GM10248 (cell line): ENCODE measurements at regions of chr2 and their contacts with region 1.

Region 1: DNA sequence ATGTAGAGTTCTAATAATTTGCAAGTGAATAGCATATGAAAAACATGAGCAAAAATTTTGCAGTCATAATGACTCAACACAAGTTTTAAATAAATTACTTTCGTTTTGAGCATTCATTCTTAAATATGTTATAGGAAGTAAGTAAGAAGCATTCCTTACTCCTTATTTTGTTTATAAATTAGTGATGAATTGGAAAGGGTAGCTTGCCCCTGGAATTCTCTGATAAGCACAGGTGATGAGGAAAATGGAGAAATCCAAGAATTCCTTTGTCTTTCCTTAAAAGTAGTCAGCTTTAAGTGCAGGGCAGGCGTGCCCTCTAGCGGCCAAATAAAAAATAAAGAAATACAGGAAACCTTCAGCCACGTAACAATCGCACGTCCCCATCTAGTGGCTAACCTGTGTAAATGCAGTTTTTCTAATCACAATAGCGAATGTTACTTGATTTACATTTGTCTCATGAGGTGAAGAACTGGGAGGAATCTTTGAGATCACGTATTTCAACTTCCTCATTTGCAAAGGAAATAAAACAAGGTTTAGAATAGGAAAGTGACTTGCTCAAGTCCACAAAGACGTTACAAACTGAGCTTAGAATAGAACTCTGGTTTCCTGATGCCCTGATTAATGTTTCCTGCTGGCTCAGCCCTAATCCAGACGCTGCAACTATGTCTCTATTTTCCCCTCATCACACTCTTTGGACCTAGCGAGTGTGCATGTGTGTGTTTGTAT is 47.2 kb upstream of the ZNG1B start:
- DNase-seq: peak; percentile 69
- CTCF ChIP-seq: peak; percentile 96

Region 2: GRCh38 chr2:112839407-112840067 is 550.8 kb before region 1 on chr2:
- CTCF ChIA-PET with region 1: no interaction called
- POLR2A ChIA-PET with region 1: no interaction called
- DNase-seq: no peak
- CTCF ChIP-seq: no peak

Region 3: DNA sequence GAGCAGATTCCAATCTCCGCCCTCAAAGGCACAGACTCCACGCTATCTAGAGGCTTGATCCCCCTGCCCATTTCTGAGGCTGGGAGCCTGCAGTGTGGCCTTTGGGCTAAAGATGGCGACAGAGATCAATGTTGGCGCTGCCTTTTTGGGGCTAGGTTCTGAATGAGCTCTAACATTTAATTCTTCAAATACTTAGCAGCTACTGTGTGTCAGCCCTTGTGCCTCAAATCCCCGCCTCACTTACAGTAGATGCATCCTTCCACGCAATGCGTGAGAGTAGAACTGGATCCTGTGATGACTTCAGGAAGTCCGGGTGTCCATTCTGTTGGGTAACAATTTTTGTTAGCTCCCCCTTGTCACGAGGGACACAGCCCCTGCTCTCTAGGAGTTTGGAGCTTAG is 310.2 kb before region 1 on chr2:
- CTCF ChIA-PET with region 1: interaction called, 13 read pairs
- POLR2A ChIA-PET with region 1: no interaction called
- DNase-seq: peak; percentile 57
- CTCF ChIP-seq: peak; percentile 84

Region 4: DNA sequence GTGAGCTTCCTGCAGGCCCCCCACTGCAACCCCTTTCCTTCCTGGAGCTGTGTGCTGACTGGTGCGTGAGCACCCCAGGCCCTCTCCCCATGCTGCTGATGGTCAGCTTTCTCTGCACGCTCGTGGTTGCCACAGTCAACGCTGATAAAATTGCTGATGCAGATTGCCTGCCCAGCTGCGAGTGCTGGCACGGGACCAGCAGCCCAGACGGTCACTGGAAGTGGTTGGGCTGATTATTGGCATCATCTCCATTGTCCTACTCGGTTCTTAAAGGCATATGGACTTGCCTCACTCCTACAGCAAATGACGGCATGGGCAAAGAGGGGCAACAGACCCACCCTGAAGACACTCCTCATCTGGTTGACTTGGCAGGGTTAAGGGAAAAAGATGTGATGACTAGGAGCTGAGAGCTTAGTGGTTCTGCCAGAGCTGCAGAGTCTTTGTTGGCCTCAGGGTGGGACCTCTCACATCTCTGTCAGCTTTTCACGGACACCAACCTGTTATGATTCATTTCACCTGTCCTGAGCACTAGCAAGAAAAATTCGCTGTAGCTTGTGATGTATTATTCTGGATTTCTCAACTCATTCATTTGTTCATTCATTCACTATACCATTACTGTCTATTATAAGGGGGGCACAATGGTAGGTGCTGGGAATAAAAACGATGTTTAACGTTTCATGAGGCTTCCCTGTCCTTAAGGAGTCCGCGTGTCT is 150.0 kb before region 1 on chr2:
- CTCF ChIA-PET with region 1: interaction called, 100 read pairs
- POLR2A ChIA-PET with region 1: interaction called, 6 read pairs
- DNase-seq: no peak
- CTCF ChIP-seq: no peak

Region 5: GRCh38 chr2:113257516-113258264 is 132.6 kb before region 1 on chr2:
- CTCF ChIA-PET with region 1: interaction called, 100 read pairs
- POLR2A ChIA-PET with region 1: no interaction called
- DNase-seq: no peak
- CTCF ChIP-seq: no peak

Region 6: GRCh38 chr2:113324684-113325160 is 65.6 kb before region 1 on chr2:
- CTCF ChIA-PET with region 1: no interaction called
- POLR2A ChIA-PET with region 1: no interaction called
- DNase-seq: peak; percentile 68
- CTCF ChIP-seq: no peak

Region 7: DNA sequence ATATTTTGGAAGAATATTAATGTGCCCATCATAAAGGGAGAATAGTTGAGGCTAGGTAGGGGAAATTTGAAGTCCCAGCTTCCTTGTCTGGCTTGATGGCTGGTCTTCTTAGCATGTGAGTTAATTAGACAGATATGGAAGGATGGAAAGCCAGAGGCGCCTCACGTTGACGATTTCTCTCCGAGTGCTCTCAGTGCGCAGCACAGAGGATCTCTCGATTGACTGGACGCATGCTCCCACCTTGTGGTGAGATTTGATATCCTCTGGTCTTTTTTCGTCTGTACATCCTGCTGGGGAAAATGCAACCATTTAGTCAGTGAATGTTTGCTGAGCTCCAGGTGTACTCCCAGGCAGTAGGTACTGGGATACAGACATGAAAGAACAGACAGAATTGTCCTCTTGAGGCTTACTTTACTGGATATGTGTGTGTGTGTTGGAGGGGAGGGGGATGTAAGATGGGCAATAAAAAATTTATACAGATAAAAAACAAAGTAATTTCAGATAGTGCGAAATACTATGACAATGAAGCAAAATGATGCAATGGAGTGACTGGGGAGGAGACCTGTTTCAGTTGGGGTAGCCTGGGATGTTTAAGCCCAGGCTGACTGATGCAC is 19.7 kb before region 1 on chr2:
- CTCF ChIA-PET with region 1: interaction called, 51 read pairs
- POLR2A ChIA-PET with region 1: no interaction called
- DNase-seq: peak; percentile 49
- CTCF ChIP-seq: peak; percentile 53